ENCODE measurements at regions of chr17 and their contacts with region 1.

Region 1: GRCh38 chr17:76014184-76014924 is 12.8 kb downstream of the EVPL start:
- H3K4me3 ChIP-seq: no peak overlapping the region
- H3K27ac ChIP-seq: no peak overlapping the region
- H3K4me1 ChIP-seq: no peaks in the 10 kb centered on the region
- CTCF ChIP-seq: peak; percentile 94

Region 2: GRCh38 chr17:75904749-75905521 is 109.4 kb before region 1 on chr17 and contains the start of gene MRPL38:
- CTCF ChIA-PET with region 1: interaction called, 10 read pairs
- POLR2A ChIA-PET with region 1: interaction called, 3 read pairs
- H3K4me3 ChIP-seq: peak within 1 kb of the TSS; percentile 92
- H3K27ac ChIP-seq: peak within 1 kb of the TSS; percentile 87
- H3K4me1 ChIP-seq: peaks cover 8% of the 10 kb centered on the region
- CTCF ChIP-seq: peak; percentile 99

Region 3: GRCh38 chr17:76027159-76027839 is 12.9 kb after region 1 on chr17 and contains the start of gene EVPL:
- CTCF ChIA-PET with region 1: interaction called, 39 read pairs
- POLR2A ChIA-PET with region 1: interaction called, 9 read pairs
- H3K4me3 ChIP-seq: no peak within 1 kb of the TSS
- H3K27ac ChIP-seq: no peak within 1 kb of the TSS
- H3K4me1 ChIP-seq: peaks cover 12% of the 10 kb centered on the region
- CTCF ChIP-seq: no peak

Region 4: DNA sequence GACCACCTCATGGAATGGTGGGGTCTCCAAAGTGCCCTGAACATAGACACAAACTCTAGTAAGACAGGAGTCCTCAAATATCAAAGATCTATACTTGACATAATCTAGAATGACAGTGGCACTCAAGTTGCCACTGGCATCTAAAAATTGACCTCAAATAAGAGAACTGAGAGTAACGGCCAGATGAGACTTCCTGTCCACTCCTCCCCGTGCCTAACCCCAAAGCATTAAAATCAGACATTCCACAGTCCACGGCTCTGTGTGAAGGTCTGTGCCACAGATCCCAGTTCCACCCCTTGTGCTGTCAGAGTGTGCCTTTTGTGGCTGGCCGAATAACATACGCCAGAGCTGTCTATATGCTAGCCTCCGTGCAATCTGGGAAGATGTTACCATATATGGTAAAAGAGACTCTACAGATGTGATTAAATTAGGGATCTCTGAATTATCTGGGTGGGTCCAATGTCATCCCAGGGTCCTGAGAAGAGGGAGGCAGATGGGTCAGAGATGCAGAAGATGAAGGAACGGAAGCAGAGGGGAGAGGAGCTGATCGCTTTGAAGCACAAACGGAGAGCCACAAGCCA is 33.8 kb after region 1 on chr17:
- CTCF ChIA-PET with region 1: interaction called, 58 read pairs
- POLR2A ChIA-PET with region 1: no interaction called
- H3K4me3 ChIP-seq: no peak overlapping the region
- H3K27ac ChIP-seq: no peak overlapping the region
- H3K4me1 ChIP-seq: no peaks in the 10 kb centered on the region
- CTCF ChIP-seq: no peak

Region 5: DNA sequence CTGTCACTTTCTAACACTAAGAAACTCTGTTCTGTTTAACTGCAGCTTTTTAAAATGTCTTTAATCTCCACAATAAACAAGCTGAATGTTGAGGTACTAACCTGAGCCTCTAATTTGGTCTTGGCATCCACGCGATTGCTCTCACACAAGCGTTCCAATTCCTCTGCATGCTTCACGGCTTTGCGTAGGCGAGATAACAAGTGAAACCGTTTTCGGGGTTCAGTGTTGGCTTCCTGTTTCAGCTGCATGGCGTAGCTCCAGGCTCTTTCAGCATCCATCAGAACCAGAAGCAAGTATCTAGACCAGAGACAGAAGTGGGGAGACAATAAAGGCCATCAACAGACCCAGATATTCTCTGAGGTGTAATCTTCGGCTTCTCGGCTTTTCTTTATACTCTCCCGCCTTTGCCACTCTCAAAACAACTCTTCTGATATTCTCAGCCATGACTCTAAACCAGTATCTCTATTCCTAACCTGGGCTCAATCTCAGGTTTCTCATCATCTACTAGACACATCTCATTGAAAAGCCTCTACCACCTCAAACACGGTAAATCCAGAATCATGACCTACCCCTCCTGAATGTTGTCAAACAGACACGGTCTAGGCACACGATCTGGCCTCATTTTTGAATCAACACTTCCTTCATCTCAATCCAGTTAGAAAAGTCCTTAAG is 49.7 kb after region 1 on chr17:
- CTCF ChIA-PET with region 1: interaction called, 58 read pairs
- POLR2A ChIA-PET with region 1: interaction called, 3 read pairs
- H3K4me3 ChIP-seq: no peak overlapping the region
- H3K27ac ChIP-seq: no peak overlapping the region
- H3K4me1 ChIP-seq: no peaks in the 10 kb centered on the region
- CTCF ChIP-seq: no peak

Region 6: GRCh38 chr17:76079956-76080767 is 65.8 kb after region 1 on chr17:
- CTCF ChIA-PET with region 1: interaction called, 10 read pairs
- POLR2A ChIA-PET with region 1: interaction called, 11 read pairs
- H3K4me3 ChIP-seq: no peak overlapping the region
- H3K27ac ChIP-seq: no peak overlapping the region
- H3K4me1 ChIP-seq: peaks cover 16% of the 10 kb centered on the region
- CTCF ChIP-seq: no peak

Region 7: GRCh38 chr17:76219670-76220383 is 205.5 kb after region 1 on chr17:
- CTCF ChIA-PET with region 1: no interaction called
- POLR2A ChIA-PET with region 1: no interaction called
- H3K4me3 ChIP-seq: no peak overlapping the region
- H3K27ac ChIP-seq: no peak overlapping the region
- H3K4me1 ChIP-seq: no peaks in the 10 kb centered on the region
- CTCF ChIP-seq: no peak

Region 8: DNA sequence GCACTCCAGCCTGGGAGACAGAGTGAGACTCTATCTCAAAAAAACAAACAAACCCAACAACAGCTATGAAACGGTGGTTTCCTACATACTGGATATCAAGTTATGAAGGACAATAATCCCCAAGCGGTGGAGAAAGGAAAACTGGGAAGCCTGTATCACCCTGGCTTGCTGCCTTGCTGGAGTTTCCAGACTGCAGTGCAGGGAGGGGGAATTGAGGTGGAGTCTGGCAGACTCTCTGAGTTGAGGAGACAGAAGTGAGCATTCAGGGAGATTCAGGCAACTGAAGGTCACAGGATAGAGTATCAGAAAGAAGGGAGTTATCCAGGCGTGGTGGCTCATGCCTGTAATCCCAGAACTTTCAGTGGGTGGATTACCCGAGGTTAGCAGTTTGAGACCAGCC is 281.8 kb after region 1 on chr17:
- CTCF ChIA-PET with region 1: interaction called, 17 read pairs
- POLR2A ChIA-PET with region 1: no interaction called
- H3K4me3 ChIP-seq: no peak overlapping the region
- H3K27ac ChIP-seq: no peak overlapping the region
- H3K4me1 ChIP-seq: no peaks in the 10 kb centered on the region
- CTCF ChIP-seq: no peak

Measured in HEK293 (cell line).